MCF 10A (cell line): ENCODE measurements at regions of chr2 and their contacts with region 1.

Region 1: GRCh38 chr2:79887747-79888374 is 375.0 kb downstream of the CTNNA2 start:
- DNase-seq: peak; percentile 72
- H3K4me3 Mint-ChIP-seq: no peak overlapping the region
- H3K27ac Mint-ChIP-seq: no peak overlapping the region
- H3K4me1 Mint-ChIP-seq: peaks cover 7% of the 10 kb centered on the region
- H3K27me3 Mint-ChIP-seq: peaks cover 28% of the 10 kb centered on the region
- CTCF ChIP-seq: peak; percentile 83

Region 2: DNA sequence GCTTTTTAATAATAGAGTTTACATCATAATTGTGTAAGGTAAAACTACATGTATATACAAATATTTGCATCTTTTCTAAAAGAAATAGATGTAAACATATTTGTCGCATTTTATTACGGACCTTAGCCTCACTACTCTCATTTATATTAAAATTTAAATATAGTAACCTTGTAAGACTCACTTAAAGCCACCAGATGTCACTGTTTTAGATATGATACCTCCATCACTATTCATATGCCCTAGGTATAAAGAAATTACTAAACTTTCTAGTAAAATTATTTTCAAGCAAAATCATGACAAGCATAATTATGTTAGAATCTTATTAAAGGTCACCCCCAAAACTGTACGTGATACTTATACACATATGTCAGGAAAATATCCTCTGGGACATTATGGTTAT is 1536.7 kb before region 1 on chr2:
- CTCF ChIA-PET with region 1: no interaction called
- POLR2A ChIA-PET with region 1: no interaction called
- intact Hi-C with region 1: loop called (anchors 10 kb)
- DNase-seq: peak; percentile 3
- H3K4me3 Mint-ChIP-seq: no peak overlapping the region
- H3K27ac Mint-ChIP-seq: no peak overlapping the region
- H3K4me1 Mint-ChIP-seq: no peaks in the 10 kb centered on the region
- H3K27me3 Mint-ChIP-seq: peaks cover 25% of the 10 kb centered on the region
- CTCF ChIP-seq: no peak

Region 3: DNA sequence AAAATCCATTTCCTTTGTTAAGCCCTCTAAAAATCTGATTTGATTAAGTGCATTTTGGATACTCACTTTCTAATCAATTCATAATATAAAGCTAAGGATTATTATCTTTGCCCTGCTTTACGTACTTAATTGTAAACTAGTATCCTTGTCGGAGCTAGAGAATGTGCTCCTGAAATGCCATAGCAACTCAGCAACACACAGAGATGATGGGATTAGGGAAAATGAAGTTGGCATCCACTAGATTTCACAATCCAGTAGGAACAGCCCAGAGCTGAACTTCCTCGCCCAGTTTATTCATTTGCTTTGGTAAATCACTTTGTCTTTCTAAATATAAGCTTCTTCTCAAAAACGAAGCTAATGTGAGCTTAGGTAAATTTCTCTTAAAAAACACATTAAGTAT is 11.3 kb after region 1 on chr2:
- CTCF ChIA-PET with region 1: interaction called, 14 read pairs
- POLR2A ChIA-PET with region 1: no interaction called
- intact Hi-C with region 1: no loop called
- DNase-seq: no peak
- H3K4me3 Mint-ChIP-seq: no peak overlapping the region
- H3K27ac Mint-ChIP-seq: no peak overlapping the region
- H3K4me1 Mint-ChIP-seq: peaks cover 14% of the 10 kb centered on the region
- H3K27me3 Mint-ChIP-seq: peaks cover 19% of the 10 kb centered on the region
- CTCF ChIP-seq: no peak

Region 4: GRCh38 chr2:79935771-79936657 is 48.2 kb after region 1 on chr2:
- CTCF ChIA-PET with region 1: no interaction called
- POLR2A ChIA-PET with region 1: no interaction called
- intact Hi-C with region 1: loop called (anchors 5 kb)
- DNase-seq: peak; percentile 76
- H3K4me3 Mint-ChIP-seq: peak overlapping the region; percentile 69
- H3K27ac Mint-ChIP-seq: peak overlapping the region; percentile 37
- H3K4me1 Mint-ChIP-seq: peaks cover 11% of the 10 kb centered on the region
- H3K27me3 Mint-ChIP-seq: peaks cover 12% of the 10 kb centered on the region
- CTCF ChIP-seq: peak; percentile 65